Cardiac septum (tissue), 1 donor: ENCODE measurements at regions of chr3 and their contacts with region 1.

Region 1: DNA sequence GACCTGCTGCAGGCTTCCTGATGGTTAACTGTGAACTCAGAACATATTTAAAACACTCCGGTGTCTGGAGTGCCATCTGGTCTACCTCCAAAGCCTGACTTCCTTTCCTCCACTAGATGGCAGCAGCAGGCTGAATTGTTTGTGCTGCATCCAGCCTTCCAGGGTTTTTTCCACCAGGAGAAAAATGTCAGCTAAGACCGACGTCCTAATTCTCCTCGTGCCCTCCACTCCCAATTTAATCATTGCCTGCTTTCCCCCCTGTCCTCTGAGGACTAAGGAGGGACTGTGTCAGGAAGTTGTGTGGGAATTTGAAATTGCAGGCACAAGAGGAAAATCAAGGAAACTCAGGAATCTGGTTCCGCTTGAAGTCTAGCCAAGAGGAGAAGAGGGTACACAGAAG is 165.2 kb upstream of the UMPS start:
- DNase-seq: no peak

Region 2: DNA sequence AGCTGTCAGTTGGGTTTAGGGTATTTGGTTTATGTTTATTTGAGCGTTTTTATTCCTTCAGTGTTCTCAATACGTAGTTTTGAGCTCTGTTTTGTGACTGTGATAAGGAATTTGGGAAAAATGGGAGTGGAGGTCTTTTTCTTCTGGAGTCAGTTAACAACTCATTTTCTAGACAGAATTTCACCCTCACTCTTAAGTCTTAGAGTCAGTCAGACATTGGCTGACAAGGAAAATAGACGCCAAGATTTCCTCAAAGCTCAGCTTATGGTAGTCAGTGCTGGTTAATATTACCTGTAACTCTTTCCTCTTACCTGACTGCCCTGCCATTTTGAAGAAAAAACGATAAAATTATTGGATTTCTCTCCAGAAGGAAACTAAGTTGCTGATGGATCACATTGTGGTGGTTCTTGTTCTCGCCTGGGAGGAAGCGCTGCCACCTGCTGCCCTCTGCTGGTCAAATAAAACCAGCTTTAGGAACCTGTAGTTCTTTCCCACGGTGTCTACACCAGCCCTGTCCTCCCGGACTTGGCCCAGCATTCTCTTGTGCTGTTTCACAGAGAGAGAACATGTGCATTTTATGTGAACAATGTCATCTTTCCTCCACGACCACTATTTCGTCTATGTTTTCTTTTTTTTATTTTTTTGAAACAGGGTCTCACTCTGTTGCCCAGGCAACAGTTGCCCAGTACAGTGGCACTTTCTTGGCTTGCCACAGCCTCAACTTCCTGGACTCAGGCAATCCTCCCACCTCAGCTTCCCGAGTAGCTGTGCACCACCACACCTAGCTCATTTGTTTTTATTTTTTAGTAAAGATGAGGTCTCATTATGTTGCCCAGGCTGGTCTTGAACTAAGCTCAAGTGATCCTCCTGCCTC is 123.8 kb after region 1 on chr3:
- intact Hi-C with region 1: loop called (anchors 1 kb)
- DNase-seq: no peak